Caco-2 (cell line): ENCODE measurements at regions of chr11 and their contacts with region 1.

Region 1: GRCh38 chr11:18853086-18853720 is 61.6 kb upstream of the PTPN5 start:
- DNase-seq: peak in 1 of 2 experiments; percentile 48
- H3K4me3 ChIP-seq: no peak overlapping the region
- H3K4me3 Mint-ChIP-seq: no peak overlapping the region
- H3K27ac Mint-ChIP-seq: no peak overlapping the region
- H3K4me1 ChIP-seq: peaks cover 9% of the 10 kb centered on the region
- H3K4me1 Mint-ChIP-seq: no peaks in the 10 kb centered on the region
- H3K27me3 ChIP-seq: no peaks in the 10 kb centered on the region
- H3K27me3 Mint-ChIP-seq: peaks cover 11% of the 10 kb centered on the region
- CTCF ChIP-seq: peak; percentile 64 to 82

Region 2: DNA sequence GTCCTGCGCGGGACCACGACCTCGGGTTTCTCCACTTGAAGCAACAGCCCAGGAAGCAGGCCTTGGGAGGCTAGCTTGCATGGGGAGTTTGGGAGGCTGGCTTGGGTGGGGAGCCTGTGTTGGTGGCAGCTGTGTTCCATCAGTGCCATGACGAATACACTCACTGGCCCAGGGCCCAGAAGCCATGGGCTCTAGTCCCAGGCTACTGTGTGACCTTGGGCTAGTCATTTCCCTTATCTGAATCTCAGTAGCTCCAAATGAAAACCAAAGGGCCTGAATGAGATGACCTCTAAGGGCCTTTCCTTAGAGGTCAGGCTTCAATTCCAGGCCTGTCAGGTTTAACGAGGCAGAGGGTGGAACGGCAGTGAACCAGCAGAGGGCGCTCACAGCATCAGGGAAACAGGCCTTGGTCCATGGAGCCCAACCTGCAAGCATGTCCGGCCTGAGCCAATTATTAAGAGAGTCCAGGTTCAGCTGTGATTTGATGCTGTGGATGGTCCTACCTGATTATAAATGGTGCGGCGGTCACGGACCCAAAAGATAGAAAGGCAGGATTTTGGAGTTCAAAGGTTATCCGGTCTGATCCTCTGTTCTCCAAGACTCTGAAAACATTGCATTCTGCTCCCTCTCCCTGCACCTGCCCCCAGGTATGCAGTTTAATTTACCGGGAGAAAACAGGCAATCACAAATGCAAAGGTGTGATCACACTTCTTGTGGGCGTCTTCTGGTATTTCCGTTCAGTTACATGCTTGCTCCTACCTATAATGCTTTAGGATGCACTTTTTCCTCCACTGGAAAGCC is 77.5 kb before region 1 on chr11:
- CTCF ChIA-PET with region 1: no interaction called
- POLR2A ChIA-PET with region 1: no interaction called
- intact Hi-C with region 1: loop called (anchors 1 kb)
- DNase-seq: peak; percentile 79 to 85
- H3K4me3 ChIP-seq: no peak overlapping the region
- H3K4me3 Mint-ChIP-seq: no peak overlapping the region
- H3K27ac Mint-ChIP-seq: no peak overlapping the region
- H3K4me1 ChIP-seq: no peaks in the 10 kb centered on the region
- H3K4me1 Mint-ChIP-seq: peaks cover 6% of the 10 kb centered on the region
- H3K27me3 ChIP-seq: no peaks in the 10 kb centered on the region
- H3K27me3 Mint-ChIP-seq: peaks cover 2% of the 10 kb centered on the region
- CTCF ChIP-seq: peak; percentile 89

Region 3: GRCh38 chr11:18802381-18803257 is 50.6 kb before region 1 on chr11:
- CTCF ChIA-PET with region 1: no interaction called
- POLR2A ChIA-PET with region 1: no interaction called
- intact Hi-C with region 1: loop called (anchors 1 kb)
- DNase-seq: peak; percentile 71 to 73
- H3K4me3 ChIP-seq: no peak overlapping the region
- H3K4me3 Mint-ChIP-seq: no peak overlapping the region
- H3K27ac Mint-ChIP-seq: no peak overlapping the region
- H3K4me1 ChIP-seq: no peaks in the 10 kb centered on the region; the same call in 1 of the 2 replicates
- H3K4me1 Mint-ChIP-seq: no peaks in the 10 kb centered on the region
- H3K27me3 ChIP-seq: no peaks in the 10 kb centered on the region
- H3K27me3 Mint-ChIP-seq: peaks cover 10% of the 10 kb centered on the region
- CTCF ChIP-seq: peak; percentile 61 to 75

Region 4: DNA sequence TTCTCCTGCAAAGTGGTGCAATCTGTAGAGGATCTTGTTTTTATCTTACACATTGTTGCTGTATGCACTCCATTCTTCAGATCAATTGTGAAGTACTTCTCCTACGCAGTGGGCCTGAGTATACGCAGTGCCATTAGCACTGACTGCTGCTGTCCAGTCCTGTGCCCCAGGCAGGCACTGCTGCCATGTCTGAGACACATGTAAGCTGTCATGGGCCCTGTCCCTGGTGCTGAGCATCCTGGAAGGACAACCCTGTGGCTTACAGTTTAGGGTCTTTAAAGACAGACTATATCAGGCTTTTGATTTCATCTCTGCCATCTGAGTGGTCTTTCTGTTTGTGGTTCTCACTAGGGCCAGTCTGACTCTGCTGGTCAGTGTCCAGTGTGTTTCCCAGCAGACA is 16.8 kb before region 1 on chr11:
- CTCF ChIA-PET with region 1: no interaction called
- POLR2A ChIA-PET with region 1: no interaction called
- intact Hi-C with region 1: no loop called
- DNase-seq: peak in 1 of 2 experiments; percentile 31
- H3K4me3 ChIP-seq: no peak overlapping the region
- H3K4me3 Mint-ChIP-seq: no peak overlapping the region
- H3K27ac Mint-ChIP-seq: no peak overlapping the region
- H3K4me1 ChIP-seq: no peaks in the 10 kb centered on the region
- H3K4me1 Mint-ChIP-seq: no peaks in the 10 kb centered on the region
- H3K27me3 ChIP-seq: no peaks in the 10 kb centered on the region; the same call in 1 of the 2 replicates
- H3K27me3 Mint-ChIP-seq: peaks cover 10% of the 10 kb centered on the region
- CTCF ChIP-seq: no peak

Region 5: GRCh38 chr11:18878211-18878610 is 25.0 kb after region 1 on chr11:
- CTCF ChIA-PET with region 1: no interaction called
- POLR2A ChIA-PET with region 1: no interaction called
- intact Hi-C with region 1: no loop called
- DNase-seq: no peak
- H3K4me3 ChIP-seq: no peak overlapping the region
- H3K4me3 Mint-ChIP-seq: no peak overlapping the region
- H3K27ac Mint-ChIP-seq: no peak overlapping the region
- H3K4me1 ChIP-seq: no peaks in the 10 kb centered on the region
- H3K4me1 Mint-ChIP-seq: no peaks in the 10 kb centered on the region
- H3K27me3 ChIP-seq: no peaks in the 10 kb centered on the region
- H3K27me3 Mint-ChIP-seq: peaks cover 7% of the 10 kb centered on the region
- CTCF ChIP-seq: no peak